Naive thymus-derived CD4-positive, alpha-beta T cell (primary cell): ENCODE measurements at regions of chr3 and their contacts with region 1.

Region 1: DNA sequence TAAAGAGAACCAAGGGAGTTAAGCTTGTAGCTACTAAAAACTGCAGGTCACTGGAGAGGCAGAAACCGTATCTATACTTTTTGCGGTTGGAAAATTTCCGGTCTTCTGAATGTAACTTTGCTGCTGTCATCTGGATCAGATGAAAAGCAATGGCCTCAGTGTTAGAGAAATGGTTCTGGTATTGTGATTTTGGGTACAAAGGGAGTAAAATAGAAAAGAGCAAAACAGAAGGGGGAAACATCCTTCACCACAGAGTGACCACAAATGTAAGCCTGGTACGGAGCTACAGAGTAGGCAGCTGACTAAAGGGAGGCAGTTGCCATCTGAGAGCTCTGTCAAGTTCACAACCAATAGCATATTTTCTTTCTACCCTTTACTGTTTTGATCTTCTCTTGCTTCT is 5.6 kb downstream of the CD96 start:
- DNase-seq: peak in 8 of 9 donors; percentile 44 to 88 (median 82)
- ATAC-seq: peak; percentile 89
- H3K4me3 ChIP-seq: peak overlapping the region; percentile 48
- H3K4me3 Mint-ChIP-seq: no peak overlapping the region
- H3K27ac ChIP-seq: peak overlapping the region; percentile 94
- H3K27ac Mint-ChIP-seq: no peak overlapping the region
- H3K4me1 ChIP-seq: peaks cover 66 to 81% of the 10 kb centered on the region in 2 donors
- H3K4me1 Mint-ChIP-seq: peaks cover 0 to 34% (median 4%) of the 10 kb centered on the region in 7 donors
- H3K27me3 ChIP-seq: no peaks in the 10 kb centered on the region
- H3K27me3 Mint-ChIP-seq: no peaks in the 10 kb centered on the region

Region 2: GRCh38 chr3:111566844-111567243 is 19.2 kb after region 1 on chr3:
- CTCF ChIA-PET with region 1: interaction called, 4 read pairs
- POLR2A ChIA-PET with region 1: interaction called, 4 read pairs
- intact Hi-C with region 1: loop called (anchors 1 to 2 kb)
- DNase-seq: no peak
- ATAC-seq: no peak
- H3K4me3 ChIP-seq: no peak overlapping the region
- H3K4me3 Mint-ChIP-seq: no peak overlapping the region
- H3K27ac ChIP-seq: no peak overlapping the region
- H3K27ac Mint-ChIP-seq: peak overlapping the region in 5 of 9 donors; percentile 4 to 70 (median 46)
- H3K4me1 ChIP-seq: peaks cover 4 to 23% of the 10 kb centered on the region in 2 donors
- H3K4me1 Mint-ChIP-seq: peaks cover 44 to 80% (median 77%) of the 10 kb centered on the region in 7 donors
- H3K27me3 ChIP-seq: no peaks in the 10 kb centered on the region
- H3K27me3 Mint-ChIP-seq: no peaks in the 10 kb centered on the region

Region 3: DNA sequence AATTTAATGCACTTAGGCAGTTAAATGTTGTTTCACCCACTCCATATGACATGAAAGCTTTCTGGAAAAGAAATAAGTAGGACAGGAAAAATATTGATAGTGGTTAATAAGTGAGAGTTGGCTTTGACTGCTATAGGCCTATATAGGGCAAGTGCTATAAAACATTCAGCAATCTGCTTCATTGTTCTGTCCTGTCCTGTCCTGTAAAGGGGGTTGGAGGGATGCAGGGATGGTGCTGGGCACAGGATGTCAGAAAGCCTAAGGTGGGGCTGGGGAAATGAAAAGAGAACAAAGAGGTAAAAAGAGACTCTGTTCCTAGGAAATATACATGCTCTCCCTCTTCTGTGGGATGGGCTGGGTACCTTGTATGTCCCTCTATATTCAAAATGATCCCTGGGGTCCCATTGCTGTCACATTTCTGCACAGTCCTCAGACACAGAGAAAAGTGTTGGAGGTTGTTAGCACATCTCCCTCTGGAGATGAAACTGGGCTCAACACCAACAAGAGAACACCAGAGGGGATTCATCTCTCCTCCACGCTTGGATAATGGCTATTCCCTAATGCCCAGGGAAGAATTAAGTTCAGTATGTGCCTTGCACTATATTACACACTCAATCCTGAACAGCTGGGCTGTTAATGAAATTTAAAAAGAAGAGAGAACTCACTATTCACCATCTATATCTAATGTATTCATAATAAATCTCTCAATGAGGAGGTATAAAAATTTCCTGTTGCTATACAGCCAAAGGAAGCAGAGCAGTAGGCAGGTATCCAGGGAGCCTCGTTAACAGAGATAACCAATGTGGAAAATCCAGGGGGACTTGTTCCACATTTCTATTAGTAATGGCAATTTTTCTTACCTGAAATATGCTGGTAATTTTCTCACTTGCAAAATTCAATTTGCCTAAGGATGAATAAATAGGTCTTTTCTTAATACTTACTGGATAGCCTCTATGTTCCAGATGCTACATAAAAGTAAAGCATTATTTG is 155.7 kb after region 1 on chr3:
- CTCF ChIA-PET with region 1: no interaction called
- POLR2A ChIA-PET with region 1: no interaction called
- intact Hi-C with region 1: no loop called
- DNase-seq: no peak
- ATAC-seq: no peak
- H3K4me3 ChIP-seq: no peak overlapping the region
- H3K4me3 Mint-ChIP-seq: no peak overlapping the region
- H3K27ac ChIP-seq: no peak overlapping the region
- H3K27ac Mint-ChIP-seq: no peak overlapping the region
- H3K4me1 ChIP-seq: no peaks in the 10 kb centered on the region
- H3K4me1 Mint-ChIP-seq: peaks cover 1 to 47% (median 33%) of the 10 kb centered on the region in 7 donors
- H3K27me3 ChIP-seq: no peaks in the 10 kb centered on the region
- H3K27me3 Mint-ChIP-seq: no peaks in the 10 kb centered on the region